ENCODE measurements at regions of chr15 and their contacts with region 1.

Region 1: GRCh38 chr15:70259028-70259424 is 161.3 kb upstream of the TLE3 start:
- DNase-seq: no peak
- ATAC-seq: no peak; the same call in 1 of the 2 replicates
- H3K4me3 ChIP-seq: no peak overlapping the region
- H3K27ac ChIP-seq: no peak overlapping the region; the same call in 1 of the 2 replicates
- H3K4me1 ChIP-seq: 0 out of 2 replicates have a peak, but pooled peaks cover 4% of the 10 kb centered on the region
- H3K27me3 ChIP-seq: no peaks in the 10 kb centered on the region
- CTCF ChIP-seq: no peak

Region 2: DNA sequence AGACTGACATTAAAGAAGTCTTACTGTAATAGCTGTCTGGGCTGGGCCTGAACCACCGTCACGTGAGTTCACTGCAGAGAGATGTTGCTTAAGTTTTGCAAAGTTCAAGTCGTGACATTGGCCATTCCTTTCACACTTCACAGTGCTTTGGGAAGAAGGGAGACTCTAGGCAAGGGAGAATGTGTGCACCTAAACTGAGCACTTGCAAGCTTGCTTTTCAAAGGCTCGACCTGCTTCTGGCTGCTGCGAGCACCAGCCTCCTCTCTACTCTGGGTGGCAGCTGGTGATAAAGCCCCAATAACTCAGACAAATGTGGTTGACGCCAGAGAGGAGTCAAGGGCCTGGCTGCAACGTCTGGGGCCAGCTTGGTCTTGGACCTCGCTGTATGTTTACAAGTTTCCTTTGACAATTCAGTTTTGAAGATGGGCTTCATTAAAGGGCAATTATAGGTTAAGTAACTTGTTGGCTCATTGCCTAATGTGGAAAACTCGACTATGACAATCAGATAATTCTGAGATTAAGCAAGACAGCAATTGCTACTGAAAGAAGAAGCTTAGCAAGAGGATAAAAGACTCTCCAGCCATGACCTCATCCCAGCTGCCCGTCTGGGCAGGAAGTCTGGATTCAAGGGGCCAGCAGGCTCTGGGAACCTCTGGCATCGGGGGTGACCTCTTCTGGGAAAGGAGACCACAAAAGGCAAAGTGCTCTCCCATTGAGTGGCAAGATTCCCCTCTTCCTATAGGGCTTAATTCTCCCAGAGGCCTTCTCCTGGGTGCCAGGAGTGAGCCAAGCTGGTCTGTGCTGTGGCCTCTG is 80.9 kb after region 1 on chr15:
- CTCF ChIA-PET with region 1: no interaction called
- POLR2A ChIA-PET with region 1: no interaction called
- in situ Hi-C with region 1: loop called (anchors 5 kb)
- intact Hi-C with region 1: no loop called
- DNase-seq: no peak
- ATAC-seq: no peak
- H3K4me3 ChIP-seq: no peak overlapping the region
- H3K27ac ChIP-seq: no peak overlapping the region
- H3K4me1 ChIP-seq: 0 out of 2 replicates have a peak, but pooled peaks cover 3% of the 10 kb centered on the region
- H3K27me3 ChIP-seq: no peaks in the 10 kb centered on the region
- CTCF ChIP-seq: no peak

Region 3: GRCh38 chr15:70376929-70377691 is 118.1 kb after region 1 on chr15:
- CTCF ChIA-PET with region 1: no interaction called
- POLR2A ChIA-PET with region 1: no interaction called
- in situ Hi-C with region 1: no loop called
- intact Hi-C with region 1: no loop called
- DNase-seq: no peak
- ATAC-seq: no peak
- H3K4me3 ChIP-seq: peak overlapping the region in 1 of 2 experiments; percentile 17; a peak in 1 of 4 replicates
- H3K27ac ChIP-seq: peak overlapping the region; percentile 57
- H3K4me1 ChIP-seq: peaks cover 44% of the 10 kb centered on the region
- H3K27me3 ChIP-seq: no peaks in the 10 kb centered on the region
- CTCF ChIP-seq: no peak

Measured in Panc1 (cell line).